H1 (cell line): ENCODE measurements at regions of chr15 and their contacts with region 1.

Region 1: DNA sequence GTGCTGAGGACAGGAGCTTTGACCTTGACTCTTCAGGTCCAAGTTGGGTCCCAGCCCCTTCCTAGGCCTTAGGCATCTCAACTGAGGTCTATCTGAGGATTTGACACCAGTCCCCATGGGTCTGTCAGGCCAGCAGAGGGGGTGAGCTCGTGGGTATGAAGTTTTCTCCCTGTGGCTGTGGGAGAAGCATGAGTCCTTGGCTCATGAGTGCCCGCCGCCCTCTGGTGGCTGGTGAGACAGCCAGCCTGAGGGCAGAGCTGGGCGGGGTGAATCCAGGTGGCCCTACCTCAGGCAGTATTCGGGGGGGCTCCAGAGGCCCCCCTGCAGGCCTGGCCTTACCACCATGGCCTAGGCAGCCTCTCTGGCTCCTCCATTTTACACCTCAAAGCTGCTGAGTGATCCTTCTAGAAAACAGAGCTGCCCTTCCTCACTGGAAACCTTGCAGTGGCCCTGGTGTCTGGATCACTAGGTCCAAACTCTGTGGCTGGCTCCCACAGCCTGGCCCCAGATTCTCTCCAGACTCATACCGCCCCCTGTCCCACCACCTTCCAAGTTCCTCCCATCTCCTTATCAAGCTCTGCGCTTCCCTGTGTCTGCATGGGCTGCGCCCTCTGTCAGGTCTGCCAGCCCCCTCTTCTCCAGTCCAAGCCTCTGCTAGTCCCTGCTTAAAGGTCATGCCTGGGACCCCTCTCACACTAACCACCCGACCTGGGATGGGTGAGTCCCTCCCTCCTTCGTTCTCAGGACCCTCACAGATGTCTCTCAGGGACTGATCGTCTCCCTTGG is 16.1 kb downstream of the SH2D7 start:
- DNase-seq: peak; percentile 49 to 83
- H3K4me3 ChIP-seq: no peak overlapping the region
- H3K27ac ChIP-seq: no peak overlapping the region
- H3K4me1 ChIP-seq: peaks cover 0 to 2% (median 0%) of the 10 kb centered on the region in 4 experiments; a peak in 1 of 7 replicates
- H3K27me3 ChIP-seq: no peaks in the 10 kb centered on the region
- CTCF ChIP-seq: peak; percentile 81 to 98 (median 81)
- EP300 ChIP-seq: no peak
- POLR2A ChIP-seq: no peak
- RAD21 ChIP-seq: peak; percentile 84 to 86

Region 2: GRCh38 chr15:77836121-77836692 is 272.3 kb before region 1 on chr15:
- CTCF ChIA-PET with region 1: no interaction called
- POLR2A ChIA-PET with region 1: no interaction called
- DNase-seq: no peak
- H3K4me3 ChIP-seq: no peak overlapping the region
- H3K27ac ChIP-seq: no peak overlapping the region
- H3K4me1 ChIP-seq: peaks cover 0 to 13% (median 5%) of the 10 kb centered on the region in 4 experiments; a peak in 2 of 7 replicates
- H3K27me3 ChIP-seq: no peaks in the 10 kb centered on the region
- CTCF ChIP-seq: peak; percentile 36 to 54 (median 40)
- EP300 ChIP-seq: no peak
- POLR2A ChIP-seq: 0 out of 3 replicates have a peak, but pooled peaks of 1 of the 2 experiments have one; percentile 35
- RAD21 ChIP-seq: peak; percentile 49 to 65

Region 3: DNA sequence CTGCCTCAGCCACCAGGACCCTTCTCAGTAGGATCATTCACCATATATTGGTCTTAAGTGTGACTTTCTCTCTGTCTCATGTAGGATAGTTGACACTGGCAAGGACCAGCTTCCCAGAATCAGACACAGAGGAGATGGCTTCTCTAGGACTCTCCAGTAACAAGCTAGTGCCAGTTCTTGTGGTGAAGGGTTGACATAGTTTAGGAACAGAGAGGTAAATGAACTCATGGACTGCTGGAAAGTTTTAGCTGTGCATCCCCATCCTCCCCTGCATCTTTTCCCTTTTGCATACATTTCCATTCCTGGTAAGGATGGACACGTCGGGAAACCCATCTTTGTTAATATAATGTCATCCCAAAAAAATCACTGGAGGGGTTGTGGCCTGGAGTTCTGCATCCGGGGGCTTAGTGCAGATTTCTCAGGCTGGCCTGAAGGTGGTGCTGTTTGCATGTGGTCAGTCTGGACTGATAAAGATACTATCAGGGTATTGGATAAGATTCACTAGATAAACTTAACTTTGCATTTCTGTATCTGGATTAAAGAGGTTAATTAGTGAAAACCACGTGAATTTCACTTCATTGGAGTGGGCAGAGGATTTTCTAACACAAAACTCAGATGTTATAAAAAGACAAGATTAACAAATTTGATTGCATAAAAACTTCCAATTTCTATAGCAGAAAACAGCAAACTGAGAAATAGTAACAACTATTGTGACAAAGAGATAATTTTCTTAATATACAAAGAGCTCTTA is 141.8 kb before region 1 on chr15:
- CTCF ChIA-PET with region 1: interaction called, 20 read pairs
- POLR2A ChIA-PET with region 1: no interaction called
- DNase-seq: peak in 1 of 2 experiments; percentile 69
- H3K4me3 ChIP-seq: no peak overlapping the region
- H3K27ac ChIP-seq: no peak overlapping the region
- H3K4me1 ChIP-seq: no peaks in the 10 kb centered on the region
- H3K27me3 ChIP-seq: no peaks in the 10 kb centered on the region; a peak in 1 of 7 replicates
- CTCF ChIP-seq: peak; percentile 71 to 85 (median 75)
- EP300 ChIP-seq: no peak
- POLR2A ChIP-seq: no peak
- RAD21 ChIP-seq: peak; percentile 84 to 85

Region 4: GRCh38 chr15:78082106-78083078 is 26.1 kb before region 1 on chr15:
- CTCF ChIA-PET with region 1: interaction called, 51 read pairs
- POLR2A ChIA-PET with region 1: no interaction called
- DNase-seq: no peak
- H3K4me3 ChIP-seq: no peak overlapping the region
- H3K27ac ChIP-seq: no peak overlapping the region
- H3K4me1 ChIP-seq: no peaks in the 10 kb centered on the region
- H3K27me3 ChIP-seq: no peaks in the 10 kb centered on the region; a peak in 1 of 7 replicates
- CTCF ChIP-seq: no peak
- EP300 ChIP-seq: no peak
- POLR2A ChIP-seq: no peak
- RAD21 ChIP-seq: no peak

Region 5: DNA sequence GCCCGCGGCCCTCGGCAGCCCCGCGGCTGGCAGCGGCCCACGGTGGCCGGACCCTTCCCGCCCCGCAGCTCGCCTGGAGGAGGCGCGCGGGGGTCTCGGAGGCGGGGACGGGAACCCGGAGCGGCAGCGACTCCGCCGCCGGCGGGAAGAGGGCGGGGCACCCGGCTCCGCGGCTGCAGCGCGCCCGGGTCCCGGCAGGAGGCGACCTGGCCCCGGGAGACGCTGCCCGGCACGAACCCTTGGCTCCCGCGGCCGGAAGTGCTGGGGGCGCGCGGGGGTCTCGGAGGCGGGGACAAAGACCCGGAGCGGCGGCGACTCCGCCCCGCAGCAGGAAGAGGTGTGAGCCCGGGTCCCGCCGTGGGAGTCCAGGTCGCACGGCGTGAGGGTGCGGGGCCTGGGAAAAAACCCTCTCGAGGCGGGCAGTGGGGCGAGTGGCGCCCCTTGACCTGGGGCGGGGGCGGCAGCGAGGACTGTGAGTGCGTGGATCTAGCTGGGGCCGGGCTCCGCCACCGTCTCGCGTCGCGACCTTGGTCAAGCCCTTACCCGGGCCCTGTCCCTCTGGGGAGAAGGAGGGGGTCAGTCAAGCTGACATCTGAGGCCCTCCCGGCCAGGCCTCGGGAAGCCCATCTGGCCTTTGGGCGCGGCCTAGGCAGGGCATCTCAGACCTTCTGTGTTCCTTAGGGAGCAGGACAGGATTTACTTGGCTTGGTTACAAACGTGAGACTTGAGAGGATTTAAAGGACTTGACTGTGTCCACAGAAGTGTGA is 23.0 kb after region 1 on chr15 and contains the start of gene CIB2:
- CTCF ChIA-PET with region 1: interaction called, 28 read pairs
- POLR2A ChIA-PET with region 1: no interaction called
- DNase-seq: peak in 1 of 2 experiments; percentile 91
- H3K4me3 ChIP-seq: peak within 1 kb of the TSS; percentile 66 to 81 (median 80)
- H3K27ac ChIP-seq: no peak within 1 kb of the TSS
- H3K4me1 ChIP-seq: peaks cover 0 to 21% (median 14%) of the 10 kb centered on the region in 4 experiments; a peak in 6 of 7 replicates
- H3K27me3 ChIP-seq: no peaks in the 10 kb centered on the region; a peak in 1 of 7 replicates
- CTCF ChIP-seq: peak; percentile 48 to 82 (median 57)
- EP300 ChIP-seq: 0 out of 3 replicates have a peak, but pooled peaks of 1 of the 2 experiments have one; percentile 26
- POLR2A ChIP-seq: no peak; a peak in 1 of 3 replicates
- RAD21 ChIP-seq: peak; percentile 55 to 69
- total RNA-seq, gene CIB2: 45.8 and 46.8 TPM in 2 replicates

Region 6: GRCh38 chr15:78204351-78205309 is 96.1 kb after region 1 on chr15:
- CTCF ChIA-PET with region 1: interaction called, 26 read pairs
- POLR2A ChIA-PET with region 1: no interaction called
- DNase-seq: peak in 1 of 2 experiments; percentile 39
- H3K4me3 ChIP-seq: no peak overlapping the region
- H3K27ac ChIP-seq: no peak overlapping the region
- H3K4me1 ChIP-seq: no peaks in the 10 kb centered on the region; a peak in 1 of 7 replicates
- H3K27me3 ChIP-seq: no peaks in the 10 kb centered on the region
- CTCF ChIP-seq: no peak
- EP300 ChIP-seq: no peak
- POLR2A ChIP-seq: no peak
- RAD21 ChIP-seq: no peak

Region 7: DNA sequence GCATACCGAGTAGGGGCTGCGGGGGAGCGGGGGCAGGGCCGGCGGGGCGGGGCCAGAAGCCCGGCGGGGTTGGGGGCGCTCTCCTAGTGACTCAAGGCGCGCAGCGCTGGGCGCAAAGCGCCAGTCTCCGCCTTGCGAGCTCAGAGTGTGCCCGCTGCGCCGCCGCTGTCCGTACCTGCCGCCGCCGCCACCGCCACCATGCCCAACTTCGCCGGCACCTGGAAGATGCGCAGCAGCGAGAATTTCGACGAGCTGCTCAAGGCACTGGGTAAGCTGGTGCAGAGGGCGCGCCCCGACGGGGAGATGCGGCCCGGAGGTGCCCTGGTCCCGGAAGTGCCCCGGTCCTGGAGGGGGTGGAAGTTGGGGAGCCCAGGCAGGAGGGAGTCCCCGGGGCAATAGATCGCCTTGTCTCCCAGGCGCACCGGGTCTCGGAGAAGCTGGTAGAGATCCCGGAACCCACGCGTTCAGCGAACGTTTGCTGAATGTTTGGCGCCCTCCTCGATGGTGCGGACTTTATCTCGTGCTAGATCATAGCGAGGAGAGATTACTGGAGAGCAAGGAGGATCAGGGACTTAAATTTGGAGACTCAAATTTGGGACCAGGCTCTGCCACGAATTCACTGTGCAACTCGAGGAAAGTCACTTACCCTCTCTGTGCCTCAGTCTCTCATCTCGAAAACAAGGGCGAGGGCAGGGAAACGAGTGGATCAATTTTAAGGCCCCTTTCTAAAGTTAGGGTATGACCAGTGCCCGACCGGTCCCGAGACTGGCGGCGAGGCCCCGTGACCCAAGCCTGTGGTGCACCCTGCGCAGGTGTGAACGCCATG is 232.0 kb after region 1 on chr15 and contains the start of gene CRABP1:
- CTCF ChIA-PET with region 1: no interaction called
- POLR2A ChIA-PET with region 1: no interaction called
- DNase-seq: peak in 1 of 2 experiments; percentile 84
- H3K4me3 ChIP-seq: peak within 1 kb of the TSS; percentile 39 to 78 (median 66)
- H3K27ac ChIP-seq: no peak within 1 kb of the TSS
- H3K4me1 ChIP-seq: peaks cover 2 to 17% (median 8%) of the 10 kb centered on the region in 4 experiments; a peak in 5 of 7 replicates
- H3K27me3 ChIP-seq: peaks cover 0 to 24% (median 16%) of the 10 kb centered on the region in 4 experiments; a peak in 5 of 7 replicates
- CTCF ChIP-seq: no peak
- EP300 ChIP-seq: no peak
- POLR2A ChIP-seq: peak; percentile 42 to 64; a peak in 2 of 3 replicates
- RAD21 ChIP-seq: 0 out of 4 replicates have a peak, but pooled peaks of 1 of the 2 experiments have one; percentile 12
- total RNA-seq, gene CRABP1: 385 and 388 TPM in 2 replicates